Posterior cingulate gyrus (tissue), 11 donors: ENCODE measurements at regions of chr11 and their contacts with region 1.

Region 1: DNA sequence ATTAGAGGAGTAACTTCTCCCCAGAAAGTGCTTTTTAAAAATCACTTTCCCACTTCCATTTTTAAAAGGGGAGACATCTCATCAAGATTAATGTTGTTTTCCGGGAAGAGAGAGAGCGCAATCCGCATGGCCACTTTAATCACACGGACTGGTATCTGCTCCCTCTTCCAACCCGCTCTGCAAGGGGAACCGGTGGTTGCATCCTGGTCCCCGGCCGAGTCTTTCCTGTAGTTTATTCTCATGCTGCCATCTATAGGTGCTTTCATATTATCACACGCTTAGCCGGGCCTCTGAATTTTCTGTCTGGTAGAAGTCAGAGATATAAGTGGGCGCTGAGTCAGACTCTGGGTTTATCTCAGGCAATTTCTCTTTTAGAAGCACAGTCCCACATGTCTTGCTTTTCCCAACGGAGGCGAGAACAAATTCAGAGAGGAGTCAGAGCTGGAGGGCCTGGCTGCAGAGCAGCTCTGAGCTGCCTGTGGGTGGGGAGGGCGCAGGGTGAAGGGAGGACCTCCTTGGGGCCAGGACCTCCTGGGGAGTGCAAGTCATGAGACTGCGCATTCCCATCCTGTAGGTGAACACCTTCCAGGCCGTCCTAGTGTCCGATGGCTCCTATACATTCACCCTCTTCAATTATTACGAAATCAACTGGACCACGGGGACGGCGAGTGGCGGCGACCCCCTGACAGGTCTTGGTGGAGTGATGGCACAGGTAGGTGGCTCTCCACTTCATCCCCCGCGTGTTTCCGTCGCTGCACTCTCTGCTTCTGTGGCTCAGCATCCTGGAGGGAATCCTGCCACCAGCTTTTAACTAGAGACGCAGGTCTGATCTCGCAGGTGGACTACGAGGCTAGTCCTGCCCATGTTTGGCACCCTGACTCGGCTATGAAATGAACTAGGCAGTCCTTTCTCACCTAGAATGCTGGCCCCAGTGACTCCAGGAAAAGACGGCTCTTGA is 11.7 kb downstream of the TECTA start:
- DNase-seq: peak; percentile 35 to 94 (median 71)

Region 2: DNA sequence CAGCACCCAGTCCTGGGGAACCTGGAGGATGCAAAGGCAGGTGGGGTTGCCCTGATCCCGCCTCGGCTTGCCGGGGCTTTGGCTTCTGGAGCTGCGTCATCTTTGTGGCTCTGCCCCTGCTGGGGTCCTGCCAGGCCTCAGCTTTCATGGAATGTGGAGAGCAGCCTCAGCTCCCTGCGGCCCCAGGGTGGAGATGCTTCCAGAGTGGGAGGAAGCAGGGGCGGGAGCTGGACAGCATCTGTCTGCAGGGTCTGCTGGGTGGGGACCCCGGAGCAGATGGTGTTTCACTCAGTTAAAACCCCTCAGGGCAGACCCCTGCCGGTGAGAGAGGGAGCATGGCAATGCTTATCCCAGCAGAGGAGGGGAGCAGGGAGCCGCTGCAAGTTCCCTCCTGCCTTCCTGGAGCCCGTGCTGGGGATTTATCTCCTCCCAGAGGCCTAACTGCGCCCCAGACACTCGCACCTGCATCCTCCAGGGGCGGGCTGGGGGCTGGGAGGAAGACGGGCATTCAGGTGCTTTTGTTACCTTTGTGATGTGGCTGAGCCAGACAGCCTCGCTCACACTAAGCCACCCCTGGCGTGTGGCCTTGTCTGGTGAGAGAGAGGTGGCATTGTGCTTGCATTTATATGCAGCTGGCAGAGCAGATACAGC is 585.5 kb before region 1 on chr11:
- intact Hi-C with region 1: no loop called
- DNase-seq: peak in 2 of 10 donors; percentile 75 to 82

Region 3: GRCh38 chr11:120632579-120632978 is 480.2 kb before region 1 on chr11:
- intact Hi-C with region 1: no loop called
- DNase-seq: no peak

Region 4: DNA sequence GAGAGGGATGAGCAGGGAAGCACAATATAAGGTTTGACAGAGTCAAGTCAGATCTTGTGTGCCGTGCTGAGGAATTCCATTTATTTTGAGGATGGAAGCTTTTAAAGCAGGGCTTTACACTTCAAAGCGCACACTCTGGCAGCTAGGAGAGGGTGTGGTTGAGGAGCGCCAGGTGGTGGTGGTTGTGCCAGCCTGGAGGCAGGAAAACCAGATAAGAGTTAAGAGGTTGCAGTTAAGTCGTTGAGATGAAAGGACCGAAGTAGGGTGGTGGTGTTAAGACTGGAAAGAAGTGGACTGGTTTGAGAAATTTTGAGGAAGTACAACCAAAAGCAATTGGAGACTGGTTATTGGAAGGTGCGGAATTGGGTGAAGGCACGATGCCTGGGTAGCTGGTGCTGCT is 320.5 kb before region 1 on chr11:
- intact Hi-C with region 1: no loop called
- DNase-seq: peak in 1 of 10 donors; percentile 14

Region 5: DNA sequence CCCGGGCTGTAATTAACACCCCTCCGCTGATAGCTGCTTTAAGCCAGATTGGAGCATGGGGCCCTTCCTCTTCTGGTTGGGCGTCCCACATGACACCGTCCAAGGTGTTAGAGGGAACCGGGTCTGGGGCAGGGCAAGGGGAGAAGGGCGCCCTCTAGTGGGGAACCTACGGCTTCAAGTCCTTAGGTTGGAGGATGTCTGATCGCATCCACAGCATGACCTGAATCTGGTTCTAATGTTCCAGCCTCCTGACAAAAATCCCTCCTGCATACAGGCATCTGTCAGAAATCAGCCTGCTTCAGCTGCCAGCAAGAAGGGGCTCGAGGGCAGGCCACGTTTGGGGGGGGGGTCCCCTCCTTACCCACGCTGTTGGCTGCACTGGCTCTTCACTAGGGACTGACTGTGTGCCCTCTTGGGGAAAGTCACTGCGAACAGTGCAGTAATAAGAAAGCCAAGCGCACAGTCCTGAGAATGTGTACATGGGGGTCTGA is 183.1 kb before region 1 on chr11:
- intact Hi-C with region 1: loop called (anchors 5 kb)
- DNase-seq: peak in 4 of 10 donors; percentile 51 to 81 (median 60)

Region 6: GRCh38 chr11:121032546-121032945 is 80.2 kb before region 1 on chr11:
- intact Hi-C with region 1: loop called (anchors 10 kb)
- DNase-seq: no peak

Region 7: DNA sequence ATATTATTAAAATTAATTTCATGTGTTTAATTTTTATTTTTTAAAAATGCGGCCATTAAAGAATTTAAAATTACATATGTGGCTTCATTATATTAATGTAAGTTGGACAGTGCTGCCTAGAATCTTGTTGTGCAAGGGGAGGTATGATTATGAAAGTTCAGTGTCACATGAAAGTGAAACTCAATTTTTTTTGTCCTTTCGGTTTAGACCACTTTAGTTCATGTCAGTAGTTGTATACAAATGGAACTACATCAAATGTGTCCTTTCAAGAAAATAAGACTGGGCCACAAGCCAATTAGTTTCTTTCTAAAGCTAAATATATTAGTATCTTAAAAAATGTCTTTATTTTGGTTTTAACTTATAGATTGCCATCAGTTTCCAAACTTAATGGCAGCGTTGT is 53.2 kb before region 1 on chr11:
- intact Hi-C with region 1: no loop called
- DNase-seq: no peak